ENCODE measurements at regions of chr14 and their contacts with region 1.

Region 1: DNA sequence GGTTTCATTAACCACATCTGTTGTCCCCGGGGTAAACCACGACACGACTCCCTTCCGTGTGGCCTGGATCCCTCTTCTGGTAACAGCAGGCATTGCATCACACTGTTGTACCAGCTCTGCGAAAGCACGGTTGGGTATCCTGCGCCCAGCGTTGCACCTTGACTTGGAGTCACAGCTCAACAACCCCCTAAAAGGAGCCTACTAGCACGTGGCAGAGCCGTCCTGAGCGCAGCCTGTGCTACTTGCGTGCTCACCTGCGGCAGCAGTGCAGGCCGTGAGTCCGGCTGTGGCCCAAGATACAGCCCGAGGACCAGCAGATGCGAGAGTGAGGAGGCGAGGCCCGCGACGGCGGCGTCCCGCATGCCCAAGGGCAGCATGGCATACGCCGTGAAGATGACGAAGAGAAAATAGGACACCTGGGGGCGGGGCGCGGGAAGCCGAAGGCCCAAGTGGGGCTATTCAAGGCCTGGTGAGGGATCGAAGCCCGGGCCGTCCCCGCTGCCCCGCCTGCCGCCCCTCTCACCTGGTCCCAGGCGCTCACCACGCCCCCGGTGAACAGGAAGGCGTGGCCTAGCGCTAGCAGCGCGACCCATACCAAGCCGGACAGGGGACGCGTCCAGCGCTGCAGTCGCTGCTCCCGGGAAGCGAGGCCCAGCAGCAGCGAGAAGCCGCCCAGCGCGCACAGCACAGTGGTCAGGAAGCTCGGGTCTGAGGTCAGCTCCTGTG is 2.4 kb downstream of the ADCY4 start:
- DNase-seq: peak; percentile 34 to 89
- H3K4me3 ChIP-seq: peak overlapping the region; percentile 32 to 62 (median 52)
- H3K27ac ChIP-seq: no peak overlapping the region
- H3K4me1 ChIP-seq: peaks cover 0 to 16% (median 9%) of the 10 kb centered on the region in 4 experiments; a peak in 5 of 7 replicates
- H3K27me3 ChIP-seq: peaks cover 39 to 85% (median 59%) of the 10 kb centered on the region in 4 experiments
- CTCF ChIP-seq: peak in 2 of 3 experiments; percentile 56 to 79; a peak in 3 of 4 replicates
- EP300 ChIP-seq: no peak
- POLR2A ChIP-seq: no peak
- RAD21 ChIP-seq: peak; percentile 50 to 54

Region 2: GRCh38 chr14:24071144-24071697 is 261.2 kb before region 1 on chr14 and contains the start of gene CPNE6:
- CTCF ChIA-PET with region 1: no interaction called
- POLR2A ChIA-PET with region 1: no interaction called
- DNase-seq: no peak
- H3K4me3 ChIP-seq: no peak within 1 kb of the TSS
- H3K27ac ChIP-seq: no peak within 1 kb of the TSS
- H3K4me1 ChIP-seq: no peaks in the 10 kb centered on the region
- H3K27me3 ChIP-seq: no peaks in the 10 kb centered on the region; a peak in 1 of 7 replicates
- CTCF ChIP-seq: no peak
- EP300 ChIP-seq: no peak
- POLR2A ChIP-seq: no peak
- RAD21 ChIP-seq: no peak
- total RNA-seq, gene CPNE6: not detected in 2 replicates

Region 3: DNA sequence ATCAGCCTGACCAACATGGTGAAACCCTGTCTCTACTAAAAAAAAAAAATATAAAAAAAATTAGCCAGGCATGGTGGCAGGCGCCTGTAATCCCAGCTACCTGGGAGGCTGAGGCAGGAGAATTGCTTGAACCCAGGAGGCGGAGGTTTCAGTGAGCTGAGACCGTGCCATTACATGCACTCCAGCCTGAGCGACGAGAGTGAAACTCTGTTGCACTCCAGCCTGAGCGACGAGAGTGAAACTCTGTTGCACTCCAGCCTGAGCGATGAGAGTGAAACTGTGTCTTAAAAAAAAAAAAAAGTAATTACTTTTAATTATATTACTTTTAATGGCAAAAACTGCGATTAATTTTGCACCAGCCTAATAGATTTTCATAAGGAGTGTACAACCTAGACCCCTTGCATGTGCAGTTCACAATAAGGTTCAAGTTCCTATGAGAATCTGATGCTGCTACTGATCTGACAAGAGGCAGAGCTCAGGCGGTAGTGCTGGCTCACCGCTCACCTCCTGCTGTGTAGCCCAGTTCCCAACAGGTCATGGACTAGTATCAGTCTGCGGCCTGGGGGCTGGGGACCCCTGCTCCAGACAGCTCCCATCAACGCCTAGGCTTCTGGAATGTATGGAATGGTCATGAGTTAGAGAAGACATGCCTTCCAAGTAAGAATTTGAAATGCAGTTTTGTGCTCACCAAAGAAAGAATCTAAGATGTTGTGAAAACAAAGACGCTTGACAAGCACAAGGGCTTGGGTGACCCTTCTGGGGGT is 11.0 kb before region 1 on chr14:
- CTCF ChIA-PET with region 1: interaction called, 173 read pairs
- POLR2A ChIA-PET with region 1: interaction called, 4 read pairs
- DNase-seq: no peak
- H3K4me3 ChIP-seq: no peak overlapping the region
- H3K27ac ChIP-seq: no peak overlapping the region
- H3K4me1 ChIP-seq: no peaks in the 10 kb centered on the region
- H3K27me3 ChIP-seq: peaks cover 0 to 50% (median 33%) of the 10 kb centered on the region in 4 experiments; a peak in 6 of 7 replicates
- CTCF ChIP-seq: no peak
- EP300 ChIP-seq: no peak
- POLR2A ChIP-seq: no peak
- RAD21 ChIP-seq: no peak

Region 4: GRCh38 chr14:24351517-24351916 is 19.1 kb after region 1 on chr14:
- CTCF ChIA-PET with region 1: interaction called, 19 read pairs
- POLR2A ChIA-PET with region 1: interaction called, 3 read pairs
- DNase-seq: no peak
- H3K4me3 ChIP-seq: no peak overlapping the region
- H3K27ac ChIP-seq: no peak overlapping the region
- H3K4me1 ChIP-seq: no peaks in the 10 kb centered on the region
- H3K27me3 ChIP-seq: peaks cover 0 to 11% (median 9%) of the 10 kb centered on the region in 4 experiments; a peak in 5 of 7 replicates
- CTCF ChIP-seq: 0 out of 4 replicates have a peak, but pooled peaks of 1 of the 3 experiments have one; percentile 4
- EP300 ChIP-seq: no peak
- POLR2A ChIP-seq: no peak
- RAD21 ChIP-seq: 0 out of 4 replicates have a peak, but pooled peaks of 1 of the 2 experiments have one; percentile 2

Region 5: GRCh38 chr14:24411443-24412389 is 79.3 kb after region 1 on chr14:
- CTCF ChIA-PET with region 1: interaction called, 42 read pairs
- POLR2A ChIA-PET with region 1: interaction called, 3 read pairs
- DNase-seq: peak in 1 of 2 experiments; percentile 56
- H3K4me3 ChIP-seq: no peak overlapping the region
- H3K27ac ChIP-seq: no peak overlapping the region
- H3K4me1 ChIP-seq: no peaks in the 10 kb centered on the region
- H3K27me3 ChIP-seq: 0 out of 7 replicates have a peak, but pooled peaks cover 0 to 2% (median 0%) of the 10 kb centered on the region in 4 experiments
- CTCF ChIP-seq: peak; percentile 66 to 89 (median 84)
- EP300 ChIP-seq: no peak
- POLR2A ChIP-seq: no peak
- RAD21 ChIP-seq: peak; percentile 66 to 76

Region 6: DNA sequence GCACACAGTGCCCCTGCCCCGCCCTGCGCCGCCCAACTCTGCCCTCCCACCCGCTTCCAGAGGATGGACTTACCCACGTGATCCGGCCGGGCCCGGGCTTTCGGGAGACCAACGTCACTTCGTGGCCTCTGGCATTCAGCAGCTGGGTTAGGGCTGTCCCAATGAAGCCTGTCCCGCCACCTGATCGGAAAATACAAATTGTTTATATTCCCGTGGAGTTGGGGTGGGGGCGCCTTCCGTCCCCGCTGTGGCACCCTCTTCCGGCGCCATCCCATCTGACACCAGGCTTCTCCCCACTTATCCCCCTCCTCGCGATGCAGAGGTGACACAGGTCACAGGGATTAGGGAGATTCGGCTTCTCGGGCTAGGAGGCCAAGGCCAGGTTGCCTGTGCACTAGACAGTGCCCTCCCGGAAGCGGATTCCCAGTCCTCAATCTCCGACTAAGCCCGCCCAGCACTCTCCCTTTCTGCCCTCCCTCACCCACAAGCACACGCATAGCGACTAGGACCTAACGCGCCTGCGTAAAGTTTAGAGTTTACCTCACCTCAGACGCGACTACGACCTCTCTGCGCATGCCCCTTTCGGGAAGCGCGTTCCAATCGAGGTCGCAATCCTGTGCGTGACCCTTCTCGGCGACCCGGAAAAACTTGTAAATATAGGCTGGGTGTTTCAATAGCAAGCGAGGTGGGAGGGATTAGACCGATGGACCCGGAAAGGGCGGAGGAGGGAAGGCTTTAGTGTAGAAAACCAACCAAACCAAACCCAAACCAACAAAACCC is 110.0 kb after region 1 on chr14 and contains the start of gene SDR39U1:
- CTCF ChIA-PET with region 1: interaction called, 664 read pairs
- POLR2A ChIA-PET with region 1: interaction called, 25 read pairs
- DNase-seq: peak; percentile 91 to 94
- H3K4me3 ChIP-seq: peak within 1 kb of the TSS; percentile 84 to 95 (median 89)
- H3K27ac ChIP-seq: peak within 1 kb of the TSS; percentile 98
- H3K4me1 ChIP-seq: no peaks in the 10 kb centered on the region; a peak in 2 of 7 replicates
- H3K27me3 ChIP-seq: no peaks in the 10 kb centered on the region
- CTCF ChIP-seq: no peak
- EP300 ChIP-seq: no peak; a peak in 1 of 3 replicates
- POLR2A ChIP-seq: peak; percentile 56 to 89
- RAD21 ChIP-seq: no peak
- total RNA-seq, gene SDR39U1: 45.2 and 46.7 TPM in 2 replicates

Measured in H1 (cell line).